ENCODE measurements at regions of chr9 and their contacts with region 1.

Region 1: GRCh38 chr9:124861342-124862229 is at the starts of genes ARPC5L and RPL35:
- DNase-seq: peak; percentile 92 to 100 (median 96)

Region 2: DNA sequence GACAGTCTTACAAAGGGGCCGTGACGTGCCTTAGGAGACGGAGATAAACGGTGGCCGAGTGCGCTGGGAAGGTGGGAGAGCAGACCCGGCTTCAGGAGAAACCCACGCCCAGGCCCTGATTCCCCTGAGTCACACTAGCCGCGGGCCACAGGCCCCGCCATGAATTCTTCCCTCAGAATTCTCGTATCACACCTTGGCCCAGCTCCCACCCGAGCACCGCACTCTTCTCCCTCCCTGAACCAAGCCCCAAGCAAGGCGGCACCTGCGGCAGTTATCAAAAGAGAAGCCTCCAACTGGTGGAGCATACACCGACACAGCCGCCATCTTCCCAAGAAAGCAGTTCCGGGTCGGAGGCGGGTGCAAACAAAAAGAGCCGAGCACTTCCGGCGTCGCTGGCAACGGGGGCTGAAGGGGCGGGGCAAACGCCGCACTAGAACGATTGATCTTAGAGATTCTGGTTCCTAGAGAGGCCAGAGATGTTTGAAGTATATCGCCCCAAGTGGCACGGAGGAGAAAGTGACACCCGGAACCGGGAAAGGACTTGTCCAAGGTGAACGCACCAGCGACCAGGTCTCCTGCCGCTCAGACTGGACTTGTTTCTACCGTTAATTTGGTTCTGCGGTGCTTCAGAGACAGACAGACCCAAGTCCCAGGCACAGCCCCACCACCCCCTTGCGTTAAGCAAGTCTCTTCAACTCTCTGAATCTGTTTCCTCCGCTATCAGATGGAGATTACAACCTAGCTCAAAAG is 446.3 kb before region 1 on chr9 and contains the start of gene PSMB7:
- intact Hi-C with region 1: loop called (anchors 5 kb)
- DNase-seq: peak; percentile 91 to 99 (median 96)

Region 3: DNA sequence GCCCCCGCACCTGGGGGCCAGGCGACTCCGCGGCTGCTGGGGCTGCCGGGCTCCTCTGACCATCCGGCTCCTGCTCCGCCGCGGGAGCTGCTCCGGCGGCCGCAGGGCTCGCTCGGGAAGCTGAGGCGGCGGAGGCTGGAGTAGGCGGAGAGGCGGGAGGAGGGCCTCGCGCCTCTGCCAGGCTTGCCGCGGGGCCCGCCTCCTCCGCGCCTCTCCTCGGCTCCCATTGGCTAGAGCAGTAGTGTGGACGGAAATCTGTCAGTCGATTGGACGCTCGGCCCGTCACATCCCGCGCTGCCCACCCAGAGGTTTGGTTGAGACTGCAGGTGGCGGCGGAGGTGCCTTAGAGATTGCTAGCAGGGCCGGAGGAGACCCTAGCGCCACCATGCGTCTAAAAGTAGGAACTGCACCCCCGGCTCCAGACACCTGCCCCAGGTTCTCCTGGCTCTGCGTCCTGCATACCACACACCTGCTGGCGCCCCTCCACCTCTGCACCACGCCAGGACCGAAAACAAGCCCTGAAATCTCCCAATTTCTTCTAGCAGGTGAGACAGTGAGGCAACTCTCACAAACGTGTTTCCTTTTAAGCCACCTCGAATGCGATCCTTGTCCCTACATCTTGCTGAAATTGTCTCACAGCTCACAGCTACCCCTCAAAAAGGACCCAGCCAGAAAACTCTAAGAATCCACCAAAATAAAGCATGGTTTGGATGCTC is 281.9 kb after region 1 on chr9 and contains the start of gene SCAI:
- intact Hi-C with region 1: loop called (anchors 5 kb)
- DNase-seq: peak; percentile 97 to 100 (median 100)

Region 4: GRCh38 chr9:125189361-125190289 is 328.0 kb after region 1 on chr9 and contains the start of gene PPP6C:
- intact Hi-C with region 1: no loop called
- DNase-seq: peak; percentile 97 to 100 (median 98)

Measured in posterior cingulate gyrus (tissue), 11 donors.